Endothelial cell of umbilical vein (primary cell): ENCODE measurements at regions of chr14 and their contacts with region 1.

Region 1: DNA sequence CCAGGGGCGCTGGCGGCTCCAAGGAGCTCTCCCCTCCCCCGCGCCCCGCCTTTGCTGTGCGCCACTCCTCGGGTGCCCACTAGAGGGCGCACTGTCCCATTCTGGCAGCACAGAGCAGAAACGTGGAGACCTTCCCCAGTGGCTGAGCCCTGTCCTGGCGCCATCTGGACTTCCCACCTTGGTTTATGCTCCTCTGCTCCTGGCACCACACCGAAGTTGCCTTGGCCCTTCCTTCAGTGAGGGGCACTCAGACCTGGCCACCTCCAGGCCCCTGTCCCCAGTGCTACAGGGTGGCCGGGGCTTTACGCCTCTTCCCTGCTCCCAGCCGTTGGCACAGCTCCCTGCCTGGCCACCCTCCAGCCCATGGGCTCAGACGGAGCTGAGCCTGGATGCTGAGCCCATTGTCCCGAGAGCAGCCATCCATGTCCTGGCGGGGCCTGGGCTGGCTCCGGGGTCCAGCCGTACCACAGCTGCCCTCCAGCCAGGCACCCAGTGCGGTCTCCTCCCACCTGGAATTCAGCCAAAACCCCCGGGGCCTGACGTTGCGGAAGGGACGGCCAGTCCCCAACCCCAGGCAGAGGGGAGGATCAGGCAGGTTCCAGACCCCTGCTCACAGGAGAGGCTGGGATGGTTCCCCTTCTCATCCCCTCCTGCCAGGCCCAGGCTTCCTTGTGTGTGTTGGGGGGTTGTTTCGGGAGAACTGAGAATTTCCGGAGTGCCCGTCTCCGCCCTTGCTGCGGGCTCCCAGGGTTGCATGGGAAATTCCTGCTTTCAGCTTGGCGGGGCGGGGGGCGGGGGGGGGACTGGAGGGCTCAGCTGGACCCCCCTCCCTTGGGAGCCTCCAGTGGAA is 5.5 kb upstream of the CRIP1 start:
- DNase-seq: peak; percentile 93
- H3K4me3 ChIP-seq: no peak overlapping the region
- H3K27ac ChIP-seq: peak overlapping the region; percentile 91
- H3K4me1 ChIP-seq: peaks cover 26% of the 10 kb centered on the region
- H3K27me3 ChIP-seq: no peaks in the 10 kb centered on the region
- CTCF ChIP-seq: peak; percentile 99 to 100
- POLR2A ChIP-seq: peak; percentile 37

Region 2: GRCh38 chr14:105300792-105301533 is 180.2 kb before region 1 on chr14 and contains the start of gene BRF1:
- CTCF ChIA-PET with region 1: no interaction called
- POLR2A ChIA-PET with region 1: no interaction called
- dilution Hi-C with region 1: no loop called
- intact Hi-C with region 1: loop called (anchors 2 kb)
- DNase-seq: peak; percentile 95
- H3K4me3 ChIP-seq: peak within 1 kb of the TSS; percentile 25 to 79 (median 54)
- H3K27ac ChIP-seq: peak within 1 kb of the TSS; percentile 62
- H3K4me1 ChIP-seq: peaks cover 9% of the 10 kb centered on the region
- H3K27me3 ChIP-seq: no peaks in the 10 kb centered on the region
- CTCF ChIP-seq: no peak
- POLR2A ChIP-seq: peak; percentile 39
- total RNA-seq, gene BRF1: 37.9 and 47.2 TPM in 2 replicates

Region 3: DNA sequence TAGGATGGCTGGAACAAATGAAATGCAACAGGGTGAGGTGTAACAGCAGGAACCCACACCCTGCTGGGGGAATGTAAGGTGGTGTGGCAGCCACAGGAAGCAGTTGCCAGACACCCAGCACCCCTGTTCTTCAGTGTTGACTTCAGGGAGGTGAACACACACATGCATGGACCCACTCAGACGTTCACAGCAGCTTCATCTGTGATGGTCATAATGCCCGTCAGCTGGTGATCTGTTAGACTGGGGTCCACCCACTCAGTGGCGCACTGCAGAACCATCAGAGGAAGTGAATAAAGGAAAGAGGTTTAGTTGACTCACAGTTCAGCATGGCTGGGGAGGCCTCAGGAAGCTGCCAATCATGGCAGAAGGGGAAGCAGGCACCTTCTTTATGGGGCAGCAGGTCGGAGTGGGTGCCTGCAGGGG is 105.5 kb before region 1 on chr14:
- CTCF ChIA-PET with region 1: interaction called, 51 read pairs
- POLR2A ChIA-PET with region 1: no interaction called
- dilution Hi-C with region 1: no loop called
- intact Hi-C with region 1: no loop called
- DNase-seq: peak; percentile 54
- H3K4me3 ChIP-seq: no peak overlapping the region
- H3K27ac ChIP-seq: no peak overlapping the region
- H3K4me1 ChIP-seq: peaks cover 10% of the 10 kb centered on the region
- H3K27me3 ChIP-seq: no peaks in the 10 kb centered on the region
- CTCF ChIP-seq: no peak
- POLR2A ChIP-seq: no peak

Region 4: DNA sequence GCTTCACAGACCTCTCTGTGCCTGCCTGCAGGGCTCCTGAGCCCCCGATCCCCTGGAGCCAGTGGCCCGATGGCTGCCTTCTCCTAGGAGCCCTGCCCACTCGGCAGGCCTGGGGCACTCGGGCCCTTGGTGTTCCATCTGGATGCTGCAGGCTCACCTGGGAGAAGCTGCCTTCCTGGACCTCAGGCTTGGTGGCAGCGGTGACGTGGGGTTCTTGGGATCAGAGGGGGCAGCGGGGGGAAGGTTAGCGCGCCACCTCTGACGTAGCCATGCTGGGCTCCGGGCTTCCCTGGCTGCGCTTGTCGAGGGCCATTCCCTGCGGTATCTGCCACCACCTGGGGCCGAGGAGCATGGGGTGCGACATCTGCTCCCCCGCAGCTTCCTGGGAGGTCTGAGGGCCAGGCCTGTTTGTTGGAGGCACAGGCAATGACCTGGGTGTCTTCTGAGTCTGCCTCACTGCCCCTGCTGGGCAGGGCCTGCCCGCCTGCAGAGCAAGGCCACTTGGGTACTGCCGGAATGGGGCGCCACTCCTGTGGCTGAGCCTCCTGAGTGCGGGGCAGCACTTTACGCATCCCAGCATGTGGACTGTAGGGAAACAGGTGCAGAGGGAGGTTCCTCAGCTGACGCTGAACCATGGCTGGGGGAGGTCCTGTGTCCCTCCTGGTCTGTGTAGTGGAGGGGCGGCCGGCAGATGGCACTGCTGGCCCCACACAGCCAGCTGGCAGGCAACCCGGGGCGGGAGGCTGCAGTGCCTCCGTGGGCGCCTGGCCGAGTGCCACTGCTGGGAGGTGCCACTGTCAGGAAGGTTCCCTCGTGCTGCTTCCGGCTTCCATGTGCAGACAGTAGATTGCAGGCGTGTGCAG is 41.3 kb before region 1 on chr14:
- CTCF ChIA-PET with region 1: interaction called, 12 read pairs
- POLR2A ChIA-PET with region 1: no interaction called
- dilution Hi-C with region 1: no loop called
- intact Hi-C with region 1: no loop called
- DNase-seq: peak; percentile 19
- H3K4me3 ChIP-seq: no peak overlapping the region
- H3K27ac ChIP-seq: no peak overlapping the region
- H3K4me1 ChIP-seq: peaks cover 16% of the 10 kb centered on the region
- H3K27me3 ChIP-seq: no peaks in the 10 kb centered on the region
- CTCF ChIP-seq: no peak
- POLR2A ChIP-seq: no peak

Region 5: GRCh38 chr14:105456736-105457617 is 24.2 kb before region 1 on chr14:
- CTCF ChIA-PET with region 1: interaction called, 11 read pairs
- POLR2A ChIA-PET with region 1: no interaction called
- dilution Hi-C with region 1: no loop called
- intact Hi-C with region 1: no loop called
- DNase-seq: no peak
- H3K4me3 ChIP-seq: no peak overlapping the region
- H3K27ac ChIP-seq: no peak overlapping the region
- H3K4me1 ChIP-seq: no peaks in the 10 kb centered on the region
- H3K27me3 ChIP-seq: no peaks in the 10 kb centered on the region
- CTCF ChIP-seq: no peak
- POLR2A ChIP-seq: no peak